ENCODE measurements at regions of chr4 and their contacts with region 1.

Region 1: DNA sequence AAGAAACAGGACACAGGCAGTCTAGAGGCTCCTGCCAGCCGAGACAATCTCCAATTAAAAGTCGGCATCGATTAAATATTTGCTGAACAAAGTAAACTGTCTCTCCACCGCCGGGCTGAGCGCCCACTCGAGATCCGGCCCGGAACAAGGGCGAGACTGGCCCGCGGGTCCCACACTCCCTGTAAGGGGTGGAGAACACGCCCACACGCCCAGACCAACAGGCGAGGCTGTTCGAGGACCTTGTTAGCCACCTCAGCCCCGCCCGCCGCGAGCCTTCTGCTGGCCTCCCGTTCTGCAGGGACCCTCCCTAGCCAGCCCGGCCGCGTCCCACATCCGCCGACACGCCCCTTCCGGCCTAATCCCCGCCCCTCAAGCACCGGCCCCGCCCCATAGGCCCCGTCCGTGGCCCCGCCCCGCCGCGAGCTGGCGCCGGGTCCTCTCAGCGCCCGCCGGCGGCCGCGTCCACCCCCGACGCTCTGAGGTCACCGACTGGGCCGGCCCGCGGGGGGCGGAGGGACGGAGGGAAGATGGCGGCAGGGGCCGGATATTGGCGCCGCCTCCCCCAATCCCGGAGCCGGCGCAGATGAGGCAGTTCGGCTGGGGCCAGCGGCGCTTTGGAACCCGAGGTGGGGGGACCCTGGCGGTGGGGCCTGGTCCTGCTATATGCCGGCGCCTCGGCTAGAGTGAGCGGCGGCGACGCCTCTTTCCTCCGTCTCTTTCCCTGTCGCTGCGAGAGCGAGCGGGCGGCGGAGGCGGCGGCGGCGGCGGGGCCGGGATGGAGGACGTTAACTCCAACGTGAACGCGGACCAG is at the start of gene SLAIN2:
- DNase-seq: peak; percentile 96
- H3K4me3 ChIP-seq: peak within 1 kb of the TSS; percentile 95
- H3K27ac ChIP-seq: peak within 1 kb of the TSS; percentile 95
- H3K4me1 ChIP-seq: peaks cover 19% of the 10 kb centered on the region
- H3K27me3 ChIP-seq: no peaks in the 10 kb centered on the region
- CTCF ChIP-seq: peak; percentile 36
- total RNA-seq, gene SLAIN2: 74.0 and 79.1 TPM in 2 replicates

Region 2: DNA sequence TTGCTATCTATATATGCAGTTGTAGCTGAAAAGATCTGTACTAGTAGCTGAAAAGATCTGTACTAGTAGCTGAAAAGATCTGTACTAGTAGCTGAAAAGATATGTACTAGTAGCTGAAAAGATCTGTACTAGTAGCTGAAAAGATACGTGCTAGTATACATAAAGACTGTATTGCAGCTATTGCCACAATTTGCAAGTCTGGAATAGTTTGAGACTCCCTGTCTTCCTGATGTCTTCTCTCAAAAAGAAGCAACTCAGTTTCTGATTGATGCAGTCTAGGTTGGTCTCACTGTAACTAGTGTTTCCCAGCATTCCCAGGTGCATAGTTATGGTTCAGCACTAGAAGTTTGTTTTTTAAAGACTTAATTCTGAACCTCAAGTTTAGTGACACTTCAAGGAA is 15.2 kb after region 1 on chr4:
- CTCF ChIA-PET with region 1: interaction called, 3 read pairs
- POLR2A ChIA-PET with region 1: interaction called, 10 read pairs
- intact Hi-C with region 1: no loop called
- DNase-seq: no peak
- H3K4me3 ChIP-seq: no peak overlapping the region
- H3K27ac ChIP-seq: no peak overlapping the region
- H3K4me1 ChIP-seq: peaks cover 13% of the 10 kb centered on the region
- H3K27me3 ChIP-seq: no peaks in the 10 kb centered on the region
- CTCF ChIP-seq: no peak

Region 3: DNA sequence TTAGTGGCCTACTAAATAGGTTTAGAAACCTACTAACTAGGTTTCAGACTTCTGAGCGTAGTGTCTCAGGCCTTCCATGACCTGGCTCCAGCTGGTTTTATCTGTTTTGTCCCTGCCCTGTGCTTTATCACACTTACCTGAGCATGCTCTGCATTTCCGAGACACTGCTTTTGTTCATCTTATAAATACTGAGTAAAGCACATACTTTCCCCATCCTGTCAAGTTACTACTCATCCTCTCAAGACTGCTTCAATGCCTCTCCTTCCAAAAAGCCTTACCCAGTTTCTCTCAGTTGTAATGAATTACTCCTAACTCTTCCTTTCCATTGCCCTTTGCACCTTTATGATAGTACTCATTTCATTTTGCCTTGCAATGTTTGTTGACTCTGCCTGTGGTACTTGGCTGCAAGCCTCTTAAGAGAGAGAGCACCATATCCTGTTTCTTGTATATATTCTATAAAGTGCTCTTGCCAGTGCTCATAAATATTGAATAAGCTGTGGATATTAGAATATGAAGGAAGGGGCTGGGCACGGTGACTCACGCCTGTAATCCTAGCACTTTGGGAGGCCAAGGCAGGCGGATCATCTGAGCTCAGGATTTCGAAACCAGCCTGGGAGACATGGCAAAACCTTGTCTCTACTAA is 34.6 kb after region 1 on chr4:
- CTCF ChIA-PET with region 1: no interaction called
- POLR2A ChIA-PET with region 1: no interaction called
- intact Hi-C with region 1: loop called (anchors 5 kb)
- DNase-seq: peak; percentile 91
- H3K4me3 ChIP-seq: no peak overlapping the region
- H3K27ac ChIP-seq: peak overlapping the region; percentile 39
- H3K4me1 ChIP-seq: peaks cover 28% of the 10 kb centered on the region
- H3K27me3 ChIP-seq: no peaks in the 10 kb centered on the region
- CTCF ChIP-seq: no peak

Region 4: GRCh38 chr4:48499551-48500066 is 158.4 kb after region 1 on chr4:
- CTCF ChIA-PET with region 1: no interaction called
- POLR2A ChIA-PET with region 1: no interaction called
- intact Hi-C with region 1: no loop called
- DNase-seq: no peak
- H3K4me3 ChIP-seq: no peak overlapping the region
- H3K27ac ChIP-seq: no peak overlapping the region
- H3K4me1 ChIP-seq: no peaks in the 10 kb centered on the region
- H3K27me3 ChIP-seq: no peaks in the 10 kb centered on the region
- CTCF ChIP-seq: no peak

Measured in A673 (cell line).